HEK293 (cell line): ENCODE measurements at regions of chr11 and their contacts with region 1.

Region 1: GRCh38 chr11:43311791-43312607 is at the start of gene API5:
- H3K4me3 ChIP-seq: peak within 1 kb of the TSS; percentile 63
- H3K27ac ChIP-seq: peak within 1 kb of the TSS; percentile 85
- H3K4me1 ChIP-seq: no peaks in the 10 kb centered on the region
- CTCF ChIP-seq: peak; percentile 85

Region 2: DNA sequence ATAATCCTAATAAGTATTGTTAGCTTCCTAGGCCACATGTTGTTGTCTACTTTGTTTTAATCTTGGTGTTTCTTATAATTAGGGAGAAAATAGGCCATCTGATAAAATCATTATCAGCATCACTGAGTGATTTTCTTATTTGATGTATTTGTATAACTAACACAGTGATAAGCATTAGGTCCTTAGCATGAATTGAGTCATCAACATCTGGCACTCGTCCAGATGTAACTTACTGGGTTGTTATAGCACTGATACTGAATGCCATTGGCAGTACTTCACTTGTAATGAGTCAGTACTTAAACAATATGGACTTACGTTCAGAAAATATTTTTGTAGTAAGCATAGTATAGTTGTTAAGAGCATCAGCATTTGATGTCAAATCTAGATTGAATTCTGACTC is 16.0 kb after region 1 on chr11:
- CTCF ChIA-PET with region 1: interaction called, 25 read pairs
- POLR2A ChIA-PET with region 1: interaction called, 3 read pairs
- H3K4me3 ChIP-seq: no peak overlapping the region
- H3K27ac ChIP-seq: no peak overlapping the region
- H3K4me1 ChIP-seq: peaks cover 3% of the 10 kb centered on the region; the same call in 1 of the 2 replicates
- CTCF ChIP-seq: no peak

Region 3: DNA sequence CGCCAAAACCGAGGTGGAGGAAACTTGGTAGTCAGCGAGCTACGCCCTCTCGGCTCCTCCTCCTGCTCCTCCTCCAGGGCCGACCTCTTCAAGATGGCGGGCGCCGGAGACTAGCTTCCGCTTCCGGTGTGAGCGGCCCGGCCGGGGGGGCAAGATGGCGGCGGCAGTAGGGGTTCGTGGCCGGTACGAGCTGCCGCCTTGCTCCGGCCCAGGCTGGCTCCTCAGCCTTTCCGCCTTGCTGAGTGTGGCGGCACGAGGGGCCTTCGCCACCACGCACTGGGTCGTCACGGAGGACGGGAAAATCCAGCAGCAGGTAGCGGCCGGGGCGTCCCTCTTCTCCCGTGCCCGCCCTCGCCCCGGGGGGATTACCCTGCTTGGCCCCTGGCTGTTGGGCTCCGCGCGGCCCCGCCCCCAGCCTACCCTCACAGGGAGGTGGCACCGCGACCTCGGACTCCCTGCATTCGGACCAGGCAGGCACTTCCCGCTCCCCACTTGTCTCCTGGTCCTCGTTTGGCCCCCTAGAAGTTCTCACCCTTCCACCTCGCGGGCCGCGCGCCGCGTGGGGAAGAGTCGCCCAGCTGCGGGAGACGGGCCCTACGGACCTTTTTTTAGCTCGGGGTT is 46.9 kb after region 1 on chr11 and contains the start of gene TTC17:
- CTCF ChIA-PET with region 1: interaction called, 12 read pairs
- POLR2A ChIA-PET with region 1: interaction called, 49 read pairs
- H3K4me3 ChIP-seq: peak within 1 kb of the TSS; percentile 100
- H3K27ac ChIP-seq: peak within 1 kb of the TSS; percentile 61; the same call in 1 of the 2 replicates
- H3K4me1 ChIP-seq: peaks cover 3% of the 10 kb centered on the region
- CTCF ChIP-seq: no peak

Region 4: DNA sequence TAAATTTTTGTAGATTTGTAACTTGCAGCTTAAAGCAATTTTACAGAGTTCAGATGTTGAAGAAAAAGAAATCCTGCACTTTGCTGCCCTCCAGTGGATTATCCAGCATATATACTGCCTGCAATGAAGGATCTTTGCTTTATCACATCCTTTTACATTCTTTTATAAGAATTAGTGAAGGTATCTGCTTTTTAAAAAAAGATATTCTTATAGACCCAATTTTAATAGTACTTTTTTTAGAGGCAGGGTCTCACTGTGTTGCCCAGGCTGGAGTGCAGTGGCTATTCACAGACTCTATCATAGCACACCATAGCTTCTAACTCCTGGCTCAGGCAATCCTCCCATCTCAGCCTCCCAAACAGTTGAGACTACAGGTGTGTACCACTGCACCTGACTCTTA is 107.5 kb after region 1 on chr11:
- CTCF ChIA-PET with region 1: interaction called, 15 read pairs
- POLR2A ChIA-PET with region 1: no interaction called
- H3K4me3 ChIP-seq: no peak overlapping the region
- H3K27ac ChIP-seq: no peak overlapping the region
- H3K4me1 ChIP-seq: no peaks in the 10 kb centered on the region
- CTCF ChIP-seq: no peak